ENCODE measurements at regions of chr22 and their contacts with region 1.

Region 1: GRCh38 chr22:45318168-45318557 is 8.4 kb downstream of the FAM118A start:
- DNase-seq: peak; percentile 82 to 97 (median 87)
- ATAC-seq: peak; percentile 70
- H3K4me3 ChIP-seq: peak overlapping the region; percentile 50
- H3K4me3 Mint-ChIP-seq: peak overlapping the region; percentile 84
- H3K27ac ChIP-seq: peak overlapping the region; percentile 98 to 99
- H3K27ac Mint-ChIP-seq: peak overlapping the region; percentile 95
- H3K4me1 ChIP-seq: peaks cover 87% of the 10 kb centered on the region
- H3K4me1 Mint-ChIP-seq: peaks cover 95% of the 10 kb centered on the region
- H3K27me3 ChIP-seq: no peaks in the 10 kb centered on the region
- H3K27me3 Mint-ChIP-seq: no peaks in the 10 kb centered on the region
- CTCF ChIP-seq: no peak

Region 2: GRCh38 chr22:45169576-45170466 is 148.3 kb before region 1 on chr22:
- CTCF ChIA-PET with region 1: no interaction called
- POLR2A ChIA-PET with region 1: no interaction called
- intact Hi-C with region 1: loop called in 1 of 2 experiments (anchors 5 kb)
- DNase-seq: peak in 4 of 14 experiments; percentile 10 to 63 (median 36)
- ATAC-seq: no peak
- H3K4me3 ChIP-seq: no peak overlapping the region
- H3K4me3 Mint-ChIP-seq: peak overlapping the region; percentile 83
- H3K27ac ChIP-seq: peak overlapping the region; percentile 43 to 66
- H3K27ac Mint-ChIP-seq: peak overlapping the region; percentile 89
- H3K4me1 ChIP-seq: peaks cover 79% of the 10 kb centered on the region
- H3K4me1 Mint-ChIP-seq: peaks cover 88% of the 10 kb centered on the region
- H3K27me3 ChIP-seq: no peaks in the 10 kb centered on the region
- H3K27me3 Mint-ChIP-seq: no peaks in the 10 kb centered on the region
- CTCF ChIP-seq: no peak

Region 3: GRCh38 chr22:45296628-45297297 is 21.4 kb before region 1 on chr22:
- CTCF ChIA-PET with region 1: interaction called, 3 read pairs
- POLR2A ChIA-PET with region 1: interaction called, 13 read pairs
- intact Hi-C with region 1: loop called in 1 of 2 experiments (anchors 1 kb)
- DNase-seq: peak; percentile 32 to 77 (median 40)
- ATAC-seq: peak; percentile 96
- H3K4me3 ChIP-seq: peak overlapping the region; percentile 25
- H3K4me3 Mint-ChIP-seq: peak overlapping the region; percentile 45
- H3K27ac ChIP-seq: peak overlapping the region; percentile 51 to 75
- H3K27ac Mint-ChIP-seq: peak overlapping the region; percentile 86
- H3K4me1 ChIP-seq: peaks cover 34% of the 10 kb centered on the region
- H3K4me1 Mint-ChIP-seq: peaks cover 27% of the 10 kb centered on the region
- H3K27me3 ChIP-seq: no peaks in the 10 kb centered on the region
- H3K27me3 Mint-ChIP-seq: no peaks in the 10 kb centered on the region
- CTCF ChIP-seq: no peak

Region 4: DNA sequence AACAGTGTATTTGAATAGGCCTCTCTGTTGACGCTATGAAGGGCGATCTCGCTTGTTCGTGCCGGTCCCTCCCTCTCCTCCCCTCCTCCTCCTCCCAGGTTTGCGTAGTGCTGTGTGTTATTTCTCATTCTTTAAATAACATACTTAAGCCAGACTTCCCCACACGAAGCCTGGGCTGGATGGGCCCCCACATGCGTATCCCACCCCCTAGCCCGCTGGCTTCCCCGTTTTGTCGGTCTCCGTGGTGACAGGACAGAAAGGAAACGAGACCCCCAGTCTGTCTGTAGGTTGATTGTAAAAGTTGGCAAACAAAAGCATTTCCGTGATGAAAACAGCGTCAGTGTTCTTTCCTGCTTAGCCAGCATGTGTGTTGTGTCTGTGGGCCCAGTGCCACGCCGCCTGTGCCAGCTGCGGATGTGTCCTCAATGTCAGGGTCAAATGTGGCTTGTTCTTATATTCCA is 18.8 kb after region 1 on chr22:
- CTCF ChIA-PET with region 1: interaction called, 3 read pairs
- POLR2A ChIA-PET with region 1: interaction called, 9 read pairs
- intact Hi-C with region 1: loop called in 1 of 2 experiments (anchors 2 kb)
- DNase-seq: peak in 5 of 14 experiments; percentile 24 to 65 (median 55)
- ATAC-seq: peak; percentile 73
- H3K4me3 ChIP-seq: no peak overlapping the region
- H3K4me3 Mint-ChIP-seq: peak overlapping the region; percentile 71
- H3K27ac ChIP-seq: no peak overlapping the region
- H3K27ac Mint-ChIP-seq: peak overlapping the region; percentile 87
- H3K4me1 ChIP-seq: peaks cover 23% of the 10 kb centered on the region
- H3K4me1 Mint-ChIP-seq: peaks cover 34% of the 10 kb centered on the region
- H3K27me3 ChIP-seq: no peaks in the 10 kb centered on the region
- H3K27me3 Mint-ChIP-seq: no peaks in the 10 kb centered on the region
- CTCF ChIP-seq: no peak

Region 5: DNA sequence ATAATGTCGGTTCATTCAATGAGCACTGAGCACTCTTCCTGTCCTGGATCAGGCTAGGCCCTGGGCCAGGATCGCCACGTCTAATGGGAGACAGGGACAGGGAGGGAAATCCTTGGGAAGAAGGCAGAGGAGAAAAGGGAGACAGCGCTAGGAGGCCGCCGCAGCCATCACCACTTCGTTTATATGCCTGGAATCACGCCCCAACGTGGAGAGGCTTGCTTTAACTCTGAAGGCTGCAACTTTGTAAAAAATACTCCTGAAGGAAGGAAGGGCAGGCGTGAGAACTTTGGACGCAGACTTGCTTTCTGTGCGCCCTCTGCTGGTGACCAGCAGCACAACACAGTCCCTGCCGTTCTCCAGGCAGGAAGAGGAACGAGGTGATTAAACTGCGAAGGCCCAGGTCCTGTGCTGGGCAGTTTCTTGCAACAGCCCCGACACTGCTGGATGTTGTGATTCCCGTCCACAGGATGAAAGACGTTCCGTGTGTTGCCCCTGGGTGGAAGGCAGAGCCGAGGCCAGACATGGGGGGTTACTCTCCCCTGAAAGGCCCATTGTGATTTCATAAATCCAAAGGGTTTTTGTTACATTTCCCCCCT is 117.5 kb after region 1 on chr22:
- CTCF ChIA-PET with region 1: interaction called, 3 read pairs
- POLR2A ChIA-PET with region 1: no interaction called
- intact Hi-C with region 1: loop called in 1 of 2 experiments (anchors 1 kb)
- DNase-seq: peak; percentile 72 to 91 (median 78)
- ATAC-seq: peak; percentile 97
- H3K4me3 ChIP-seq: no peak overlapping the region
- H3K4me3 Mint-ChIP-seq: no peak overlapping the region
- H3K27ac ChIP-seq: no peak overlapping the region
- H3K27ac Mint-ChIP-seq: no peak overlapping the region
- H3K4me1 ChIP-seq: peaks cover 12% of the 10 kb centered on the region
- H3K4me1 Mint-ChIP-seq: peaks cover 17% of the 10 kb centered on the region
- H3K27me3 ChIP-seq: no peaks in the 10 kb centered on the region
- H3K27me3 Mint-ChIP-seq: no peaks in the 10 kb centered on the region
- CTCF ChIP-seq: peak; percentile 96

Measured in CD4-positive, alpha-beta T cell (primary cell).